Mammary epithelial cell (primary cell): ENCODE measurements at regions of chr5 and their contacts with region 1.

Region 1: GRCh38 chr5:167723254-167723871 is 568.1 kb upstream of the WWC1 start:
- DNase-seq: peak; percentile 80
- H3K4me3 ChIP-seq: no peak overlapping the region
- H3K27ac ChIP-seq: peak overlapping the region; percentile 74
- H3K4me1 ChIP-seq: peaks cover 8% of the 10 kb centered on the region
- H3K27me3 ChIP-seq: no peaks in the 10 kb centered on the region
- CTCF ChIP-seq: peak; percentile 84 to 91

Region 2: DNA sequence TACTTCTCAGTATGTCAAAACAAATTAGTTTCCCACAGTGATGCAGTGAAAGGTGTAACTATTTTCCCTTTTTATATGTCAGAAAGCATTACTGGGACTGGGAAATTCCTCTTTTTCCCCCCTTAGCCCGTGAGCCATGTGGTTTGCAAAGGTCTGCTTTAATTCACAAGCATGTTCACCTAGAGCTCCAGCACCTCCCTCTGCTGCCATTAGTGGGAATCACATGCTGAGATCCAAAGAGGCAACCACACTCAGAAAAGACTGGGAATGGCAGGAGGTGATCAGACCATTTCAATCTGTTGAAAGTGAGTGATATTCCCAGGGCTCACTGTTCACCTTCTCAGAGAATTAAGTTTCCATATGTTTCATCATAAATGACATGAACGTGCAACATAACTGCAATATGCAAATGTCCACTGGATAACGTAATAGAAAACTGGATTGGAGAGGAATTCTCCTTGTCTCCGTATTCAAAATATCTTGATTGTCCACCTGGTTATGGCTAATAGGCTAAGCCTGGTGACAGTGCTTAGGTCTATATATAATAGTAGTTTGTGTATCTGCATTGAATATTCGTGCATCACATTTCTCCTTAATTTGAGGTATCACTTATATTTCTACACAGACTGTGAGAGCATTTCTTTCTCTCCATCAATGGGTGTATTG is 135.5 kb before region 1 on chr5:
- CTCF ChIA-PET with region 1: no interaction called
- dilution Hi-C with region 1: no loop called
- in situ Hi-C with region 1: loop called in 1 of 2 experiments (anchors 25 kb)
- intact Hi-C with region 1: loop called (anchors 2 kb)
- DNase-seq: peak; percentile 30
- H3K4me3 ChIP-seq: no peak overlapping the region
- H3K27ac ChIP-seq: no peak overlapping the region
- H3K4me1 ChIP-seq: no peaks in the 10 kb centered on the region
- H3K27me3 ChIP-seq: no peaks in the 10 kb centered on the region
- CTCF ChIP-seq: peak; percentile 48 to 67

Region 3: DNA sequence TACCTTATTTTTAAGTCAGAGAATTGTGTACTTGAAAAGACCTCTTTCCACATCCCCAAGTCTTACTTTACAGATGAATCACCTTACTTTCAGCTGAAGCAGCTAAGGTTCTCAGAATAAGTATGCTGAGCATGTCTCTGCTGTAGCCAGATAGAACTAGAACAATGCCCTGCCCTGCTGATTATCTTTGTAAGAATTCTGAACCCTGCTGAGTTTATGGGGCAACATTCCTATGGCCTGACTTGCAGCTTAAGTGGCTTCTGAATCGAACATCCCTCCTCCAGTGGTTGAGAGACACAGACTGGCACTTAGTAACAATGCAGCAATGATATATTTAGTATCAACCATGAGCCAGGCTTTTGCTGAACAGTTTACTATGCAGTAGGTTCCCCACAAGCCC is 23.9 kb before region 1 on chr5:
- CTCF ChIA-PET with region 1: no interaction called
- dilution Hi-C with region 1: no loop called
- in situ Hi-C with region 1: no loop called
- intact Hi-C with region 1: loop called (anchors 1 kb)
- DNase-seq: peak; percentile 99
- H3K4me3 ChIP-seq: no peak overlapping the region
- H3K27ac ChIP-seq: peak overlapping the region; percentile 100
- H3K4me1 ChIP-seq: peaks cover 34% of the 10 kb centered on the region
- H3K27me3 ChIP-seq: no peaks in the 10 kb centered on the region
- CTCF ChIP-seq: no peak

Region 4: DNA sequence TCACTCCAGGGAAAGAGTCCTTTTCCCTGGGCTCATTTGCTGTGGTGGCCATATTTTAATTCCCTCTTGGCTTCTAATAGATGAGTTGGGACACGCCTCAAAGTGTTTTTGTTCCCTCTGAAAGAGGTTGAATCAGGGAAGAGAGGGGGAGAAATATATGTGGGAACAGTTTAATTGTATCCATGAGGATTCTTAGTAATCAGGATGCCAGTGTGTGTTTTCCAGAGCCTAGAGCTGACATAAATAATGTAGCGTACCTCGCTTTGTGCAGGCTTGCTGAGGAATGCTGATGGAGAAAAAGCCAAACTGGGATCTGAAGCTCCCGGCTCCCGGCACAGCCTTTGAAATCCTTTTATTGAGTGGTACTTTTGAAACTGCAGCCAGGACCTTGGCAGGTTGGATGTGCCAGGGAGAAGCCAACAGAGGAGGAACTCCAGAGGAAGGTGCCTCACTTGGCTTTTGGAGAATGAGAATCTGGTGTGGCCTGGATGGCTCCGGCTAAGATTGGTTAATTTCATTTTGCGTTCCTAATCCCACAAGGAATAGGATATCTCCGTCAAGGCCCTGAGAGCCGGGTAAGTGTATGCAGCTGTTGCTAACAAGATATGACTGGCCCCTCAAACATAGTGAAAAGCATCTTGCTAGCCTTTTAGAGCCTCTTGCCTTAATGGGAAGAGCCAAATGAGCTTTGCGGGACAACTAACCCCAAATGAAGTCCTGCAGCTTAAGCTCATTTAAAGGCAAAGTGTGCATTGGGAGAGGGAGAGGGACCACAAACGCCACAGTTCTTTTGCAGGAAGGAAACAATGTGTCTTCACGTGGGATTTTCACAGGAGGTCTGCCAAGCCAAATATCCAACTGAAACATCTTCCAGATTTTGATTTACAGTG is 97.0 kb after region 1 on chr5:
- CTCF ChIA-PET with region 1: no interaction called
- dilution Hi-C with region 1: no loop called
- in situ Hi-C with region 1: no loop called
- intact Hi-C with region 1: loop called (anchors 1 kb)
- DNase-seq: peak; percentile 7
- H3K4me3 ChIP-seq: peak overlapping the region; percentile 30 to 66 (median 61)
- H3K27ac ChIP-seq: peak overlapping the region; percentile 87
- H3K4me1 ChIP-seq: peaks cover 43% of the 10 kb centered on the region
- H3K27me3 ChIP-seq: no peaks in the 10 kb centered on the region
- CTCF ChIP-seq: no peak

Region 5: GRCh38 chr5:168020542-168021294 is 297.4 kb after region 1 on chr5:
- CTCF ChIA-PET with region 1: no interaction called
- dilution Hi-C with region 1: no loop called
- in situ Hi-C with region 1: loop called in 1 of 2 experiments (anchors 25 kb)
- intact Hi-C with region 1: loop called (anchors 1 kb)
- DNase-seq: no peak
- H3K4me3 ChIP-seq: no peak overlapping the region
- H3K27ac ChIP-seq: no peak overlapping the region
- H3K4me1 ChIP-seq: no peaks in the 10 kb centered on the region
- H3K27me3 ChIP-seq: no peaks in the 10 kb centered on the region
- CTCF ChIP-seq: peak; percentile 29 to 51

Region 6: DNA sequence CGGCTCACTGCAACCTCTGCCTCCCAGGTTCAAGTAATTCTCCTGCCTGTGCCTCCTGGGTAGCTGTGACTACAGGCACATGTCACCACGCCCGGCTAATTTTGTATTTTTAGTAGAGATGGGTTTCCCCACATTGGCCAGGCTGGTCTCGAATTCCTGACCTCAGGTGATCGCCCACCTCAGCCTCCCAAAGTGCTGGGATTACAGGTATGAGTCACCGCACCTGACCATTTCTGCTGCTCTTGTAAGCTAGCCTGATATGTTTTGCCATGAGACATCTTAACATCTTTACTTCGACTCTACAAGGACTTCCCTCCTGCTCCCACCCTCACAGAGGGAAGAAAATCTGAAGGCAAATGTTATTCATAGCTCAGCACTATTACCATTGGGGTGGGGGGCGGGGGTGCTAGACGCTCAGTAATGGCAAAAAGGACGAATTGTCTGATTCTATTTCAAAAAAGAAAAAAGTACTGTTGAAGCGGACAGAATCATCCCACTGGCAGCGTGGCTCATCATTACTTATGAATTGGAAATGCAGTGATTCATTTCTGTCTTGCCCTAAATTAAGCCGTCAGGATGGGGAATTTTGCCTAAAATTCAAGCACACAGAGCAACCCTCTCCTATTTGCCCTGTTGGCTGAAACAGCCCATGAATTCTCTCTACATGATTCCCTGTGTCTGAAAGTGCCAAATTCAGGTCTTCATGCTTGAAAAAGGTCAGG is 521.6 kb after region 1 on chr5:
- CTCF ChIA-PET with region 1: no interaction called
- dilution Hi-C with region 1: no loop called
- in situ Hi-C with region 1: no loop called
- intact Hi-C with region 1: no loop called
- DNase-seq: no peak
- H3K4me3 ChIP-seq: no peak overlapping the region
- H3K27ac ChIP-seq: no peak overlapping the region
- H3K4me1 ChIP-seq: no peaks in the 10 kb centered on the region
- H3K27me3 ChIP-seq: no peaks in the 10 kb centered on the region
- CTCF ChIP-seq: no peak